ENCODE measurements at regions of chr3 and their contacts with region 1.

Region 1: DNA sequence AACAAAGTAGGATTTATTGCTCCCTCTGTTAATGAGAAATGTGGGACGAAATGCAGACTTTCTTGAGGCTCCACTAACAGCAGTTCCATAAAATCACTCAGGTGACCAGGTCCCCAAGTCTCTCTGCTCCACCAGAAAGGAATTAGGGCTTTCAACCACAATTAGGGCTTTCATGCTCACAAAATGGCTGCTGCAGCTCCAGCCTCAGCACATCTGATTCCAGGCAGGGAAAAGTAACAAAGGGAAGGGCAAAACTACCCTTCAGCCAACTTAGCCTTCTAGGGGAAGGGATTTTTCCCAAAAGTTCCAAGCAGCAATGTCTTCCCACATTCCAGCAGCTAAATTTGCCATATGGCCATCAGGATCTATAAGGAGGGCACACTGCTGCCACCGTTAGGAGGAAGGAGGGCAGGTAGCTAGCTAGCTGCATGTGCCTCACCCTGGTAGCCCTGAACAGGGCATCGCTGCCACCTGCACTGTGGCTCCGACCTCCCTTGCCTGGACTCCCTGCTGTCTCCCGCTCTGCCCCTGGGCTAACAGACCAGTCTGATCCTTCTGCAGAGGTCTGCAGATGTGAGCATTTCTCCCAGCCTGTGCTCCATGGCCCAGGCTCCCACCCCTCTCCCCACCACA is 12.8 kb downstream of the CFAP100 start:
- DNase-seq: no peak
- H3K4me3 ChIP-seq: no peak overlapping the region
- H3K27ac ChIP-seq: no peak overlapping the region
- H3K27me3 ChIP-seq: peaks cover 16% of the 10 kb centered on the region
- CTCF ChIP-seq: no peak

Region 2: DNA sequence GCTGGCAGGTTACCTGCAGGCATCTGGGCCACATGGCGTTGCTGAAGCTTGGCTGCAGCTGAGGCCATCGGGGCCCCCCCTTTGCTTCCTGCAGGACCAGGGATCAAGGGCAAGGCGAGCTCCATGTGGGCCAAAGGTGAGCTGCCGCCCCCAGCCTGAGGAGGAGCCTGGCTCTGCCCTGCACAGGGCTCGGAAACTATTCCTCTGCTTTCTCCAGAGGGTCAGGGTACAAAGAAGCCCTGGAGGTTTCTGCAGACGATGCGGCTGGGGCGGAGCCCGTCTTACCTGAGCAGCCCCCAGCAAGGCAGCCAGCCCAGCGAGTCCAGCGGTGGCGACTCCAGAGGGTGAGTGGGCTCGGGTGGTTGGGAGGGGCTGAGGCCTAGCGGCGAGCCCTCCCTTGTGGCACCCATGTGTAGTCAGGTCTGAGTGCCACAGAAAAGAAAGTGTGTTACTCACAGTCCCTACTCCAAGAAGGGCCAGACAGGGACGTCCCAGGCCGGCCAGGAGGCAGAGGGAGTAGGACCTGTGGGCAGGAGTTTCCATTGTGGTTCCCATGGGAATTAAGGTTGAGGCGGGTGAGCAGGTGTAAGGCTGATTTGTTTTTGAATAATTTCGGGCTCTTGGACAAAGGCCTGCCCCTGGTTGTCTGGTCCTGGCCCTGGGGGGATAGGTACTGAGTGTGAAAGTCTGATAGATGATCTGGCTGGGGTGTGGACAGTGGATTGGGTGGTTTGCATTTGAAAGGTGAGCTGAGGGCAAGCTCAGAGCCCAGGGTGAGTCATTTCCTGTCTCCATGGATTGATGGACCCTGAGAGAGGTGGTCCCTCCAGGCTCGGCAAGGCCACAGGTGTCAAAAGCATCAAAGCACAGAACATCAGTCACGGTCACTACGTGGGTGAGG is 12.6 kb after region 1 on chr3:
- CTCF ChIA-PET with region 1: no interaction called
- POLR2A ChIA-PET with region 1: interaction called, 11 read pairs
- DNase-seq: no peak
- H3K4me3 ChIP-seq: no peak overlapping the region
- H3K27ac ChIP-seq: no peak overlapping the region
- H3K27me3 ChIP-seq: peaks cover 29% of the 10 kb centered on the region
- CTCF ChIP-seq: no peak